ENCODE measurements at regions of chr18 and their contacts with region 1.

Region 1: GRCh38 chr18:48475635-48476549 is 62.9 kb upstream of the CTIF start:
- H3K4me3 Mint-ChIP-seq: no peak overlapping the region
- H3K27ac Mint-ChIP-seq: no peak overlapping the region
- H3K4me1 Mint-ChIP-seq: peaks cover under 1% of the 10 kb centered on the region
- H3K27me3 Mint-ChIP-seq: peaks cover 15% of the 10 kb centered on the region

Region 2: GRCh38 chr18:48410095-48410920 is 65.6 kb before region 1 on chr18:
- intact Hi-C with region 1: no loop called
- H3K4me3 Mint-ChIP-seq: peak overlapping the region; percentile 72
- H3K27ac Mint-ChIP-seq: peak overlapping the region; percentile 32
- H3K4me1 Mint-ChIP-seq: peaks cover 36% of the 10 kb centered on the region
- H3K27me3 Mint-ChIP-seq: peaks cover 76% of the 10 kb centered on the region

Region 3: DNA sequence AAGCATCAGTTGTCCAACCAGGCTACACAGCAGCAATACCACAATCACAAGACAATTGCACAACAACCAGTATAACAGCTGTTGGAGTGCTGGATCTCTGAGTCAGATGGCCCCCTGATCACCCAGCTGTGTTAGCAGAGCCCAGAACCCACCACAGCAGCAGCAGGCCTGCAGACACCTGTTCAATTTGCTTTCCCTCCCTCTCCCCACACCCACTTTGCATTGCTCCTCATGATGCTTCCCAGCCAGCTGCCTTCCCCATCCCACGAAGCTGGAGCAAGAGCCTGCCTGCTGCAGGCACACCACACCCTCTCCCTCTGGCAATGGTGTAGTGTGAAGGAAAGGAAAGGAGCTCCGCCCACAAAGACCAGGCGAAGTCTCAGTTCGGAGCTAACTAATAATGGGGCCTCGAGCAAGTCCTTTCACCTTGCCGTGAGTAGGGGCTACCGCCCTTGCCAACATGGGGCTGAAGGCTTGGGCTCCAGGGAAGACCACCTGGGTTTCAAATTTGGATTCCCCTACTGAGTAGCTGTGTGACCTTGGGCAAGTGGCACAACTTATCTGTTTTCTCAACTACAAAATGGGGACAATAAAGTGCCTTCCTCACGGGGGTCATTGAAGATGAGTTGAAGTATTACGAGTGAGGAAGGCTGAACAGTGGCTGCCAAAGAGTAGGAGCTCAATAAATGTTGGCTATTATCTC is 47.3 kb before region 1 on chr18:
- intact Hi-C with region 1: no loop called
- H3K4me3 Mint-ChIP-seq: no peak overlapping the region
- H3K27ac Mint-ChIP-seq: no peak overlapping the region
- H3K4me1 Mint-ChIP-seq: no peaks in the 10 kb centered on the region
- H3K27me3 Mint-ChIP-seq: peaks cover 27% of the 10 kb centered on the region

Region 4: DNA sequence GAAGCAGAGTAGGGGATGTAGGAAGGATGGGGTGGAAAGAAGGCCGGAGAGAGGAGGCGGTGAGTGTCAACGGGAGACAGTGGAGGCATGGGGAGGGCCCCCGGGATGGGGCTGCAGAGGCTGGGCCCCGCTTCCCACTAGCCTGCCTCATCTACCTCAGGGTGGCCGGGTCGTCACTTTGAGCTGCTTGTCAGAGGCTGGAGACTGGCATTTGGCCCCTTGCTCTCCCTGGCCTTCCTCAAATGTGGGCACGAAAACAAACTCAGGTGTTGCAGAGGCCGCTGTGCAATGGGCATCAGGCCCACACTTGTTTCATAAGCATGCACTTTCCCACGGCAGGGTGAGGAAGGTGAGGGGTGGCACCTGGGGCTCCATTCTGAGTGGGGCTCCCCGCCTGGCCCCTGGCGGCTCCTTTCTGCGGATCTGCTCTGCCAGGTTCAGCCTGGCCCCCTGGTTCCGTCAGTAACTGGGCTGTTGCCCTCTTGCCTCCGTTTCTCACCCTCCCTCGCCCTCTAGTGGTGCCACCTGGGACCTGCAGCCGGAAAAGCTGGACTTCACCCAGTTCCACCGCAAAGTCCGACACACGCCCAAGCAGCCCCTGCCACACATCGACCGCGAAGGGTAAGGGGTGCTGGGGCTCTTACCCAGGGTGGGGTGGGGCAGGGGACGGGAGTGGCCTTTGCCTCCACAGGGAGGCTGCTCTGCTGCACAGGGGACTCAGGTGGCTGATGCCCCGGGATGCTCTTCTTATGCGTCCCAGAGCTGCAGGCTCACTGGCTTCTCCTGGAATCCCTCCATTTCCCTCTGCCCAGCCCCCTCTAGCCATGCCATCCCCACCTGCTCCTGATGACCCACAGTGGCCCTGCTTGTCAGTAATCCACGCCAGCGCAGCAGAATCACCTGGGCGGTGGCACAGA is 188.3 kb after region 1 on chr18:
- intact Hi-C with region 1: loop called (anchors 1 kb)
- H3K4me3 Mint-ChIP-seq: no peak overlapping the region
- H3K27ac Mint-ChIP-seq: no peak overlapping the region
- H3K4me1 Mint-ChIP-seq: peaks cover 28% of the 10 kb centered on the region
- H3K27me3 Mint-ChIP-seq: no peaks in the 10 kb centered on the region

Measured in dendritic cell treated with granulocyte-macrophage colony-stimulating factor and Interleukin-4, amounts not matched to agents 40 ng/mL and 50 ng/mL, for 4 days (primary cell).